GM12878 (cell line): ENCODE measurements at regions of chr2 and their contacts with region 1.

Region 1: DNA sequence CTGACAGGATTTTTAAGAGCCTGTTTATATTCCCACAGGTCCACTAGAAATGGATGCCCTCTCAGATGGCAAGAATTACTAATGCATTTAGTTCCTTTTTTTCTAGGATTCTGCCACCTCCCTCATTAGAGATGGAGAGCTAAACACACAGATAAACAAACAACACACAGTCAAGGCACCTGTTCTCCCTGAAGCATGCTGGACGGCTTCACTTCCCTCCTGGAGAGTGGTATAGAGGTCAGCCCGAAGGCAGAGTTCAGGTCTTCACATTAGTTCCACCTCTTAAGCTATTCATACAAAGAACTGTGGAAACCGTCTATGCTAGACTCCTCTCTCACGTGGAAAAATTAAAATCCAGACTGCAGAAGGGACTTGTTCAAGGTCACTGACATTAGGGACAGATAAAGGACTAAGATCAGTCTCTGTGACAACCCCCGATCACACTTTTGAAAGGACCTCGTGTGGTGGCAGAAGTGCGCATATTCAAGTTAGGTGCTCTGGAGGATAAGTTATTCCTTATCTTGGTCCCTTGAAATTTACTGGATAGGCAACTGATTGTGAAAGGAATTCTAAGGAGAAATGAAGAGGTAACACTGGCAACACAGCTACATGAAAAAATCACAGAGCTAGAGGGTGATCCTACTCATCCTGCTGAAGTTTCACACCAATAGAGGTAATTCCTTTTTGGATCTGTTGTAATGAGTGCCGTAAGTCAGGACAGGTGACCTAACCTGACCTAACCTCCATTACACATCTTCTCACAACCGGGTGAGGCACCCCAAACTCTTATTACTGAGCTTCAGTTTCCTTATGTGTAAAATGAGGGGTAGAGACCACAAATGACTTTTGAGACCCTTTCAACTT is 75.1 kb downstream of the SPRED2 start:
- DNase-seq: no peak
- ATAC-seq: peak; percentile 75
- H3K4me3 ChIP-seq: 0 out of 2 replicates have a peak overlapping the region, but pooled peaks have one; percentile 38
- H3K27ac ChIP-seq: peak overlapping the region; percentile 75
- H3K4me1 ChIP-seq: peaks cover 41% of the 10 kb centered on the region
- H3K27me3 ChIP-seq: no peaks in the 10 kb centered on the region
- CTCF ChIP-seq: no peak
- EP300 ChIP-seq: no peak
- POLR2A ChIP-seq: no peak
- RAD21 ChIP-seq: no peak

Region 2: DNA sequence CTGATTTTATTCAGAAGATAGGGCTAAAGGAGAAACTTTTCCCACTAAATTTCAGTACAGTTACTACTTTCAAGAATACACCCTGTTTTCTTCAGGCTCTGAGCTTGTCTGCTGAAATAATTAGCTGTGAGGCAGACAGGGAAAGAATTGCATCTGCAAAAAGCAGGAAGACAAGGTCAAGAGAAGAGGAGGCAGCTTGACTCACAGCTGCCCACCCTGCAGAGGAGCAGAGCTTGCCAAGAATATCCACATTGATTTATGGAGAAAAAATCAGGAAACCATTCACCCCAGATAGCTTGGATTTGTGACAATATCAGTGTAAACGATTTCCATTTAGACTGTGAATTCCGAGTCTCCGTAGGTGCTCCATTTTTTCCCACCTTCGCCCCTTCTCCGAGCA is 80.7 kb before region 1 on chr2:
- CTCF ChIA-PET with region 1: no interaction called
- POLR2A ChIA-PET with region 1: no interaction called
- RAD21 ChIA-PET with region 1: no interaction called
- SMC1A ChIA-PET with region 1: no interaction called
- in situ Hi-C with region 1: no loop called
- intact Hi-C with region 1: no loop called
- DNase-seq: no peak
- ATAC-seq: no peak
- H3K4me3 ChIP-seq: no peak overlapping the region
- H3K27ac ChIP-seq: no peak overlapping the region
- H3K4me1 ChIP-seq: no peaks in the 10 kb centered on the region
- H3K27me3 ChIP-seq: no peaks in the 10 kb centered on the region
- CTCF ChIP-seq: no peak
- EP300 ChIP-seq: no peak
- POLR2A ChIP-seq: no peak
- RAD21 ChIP-seq: no peak

Region 3: DNA sequence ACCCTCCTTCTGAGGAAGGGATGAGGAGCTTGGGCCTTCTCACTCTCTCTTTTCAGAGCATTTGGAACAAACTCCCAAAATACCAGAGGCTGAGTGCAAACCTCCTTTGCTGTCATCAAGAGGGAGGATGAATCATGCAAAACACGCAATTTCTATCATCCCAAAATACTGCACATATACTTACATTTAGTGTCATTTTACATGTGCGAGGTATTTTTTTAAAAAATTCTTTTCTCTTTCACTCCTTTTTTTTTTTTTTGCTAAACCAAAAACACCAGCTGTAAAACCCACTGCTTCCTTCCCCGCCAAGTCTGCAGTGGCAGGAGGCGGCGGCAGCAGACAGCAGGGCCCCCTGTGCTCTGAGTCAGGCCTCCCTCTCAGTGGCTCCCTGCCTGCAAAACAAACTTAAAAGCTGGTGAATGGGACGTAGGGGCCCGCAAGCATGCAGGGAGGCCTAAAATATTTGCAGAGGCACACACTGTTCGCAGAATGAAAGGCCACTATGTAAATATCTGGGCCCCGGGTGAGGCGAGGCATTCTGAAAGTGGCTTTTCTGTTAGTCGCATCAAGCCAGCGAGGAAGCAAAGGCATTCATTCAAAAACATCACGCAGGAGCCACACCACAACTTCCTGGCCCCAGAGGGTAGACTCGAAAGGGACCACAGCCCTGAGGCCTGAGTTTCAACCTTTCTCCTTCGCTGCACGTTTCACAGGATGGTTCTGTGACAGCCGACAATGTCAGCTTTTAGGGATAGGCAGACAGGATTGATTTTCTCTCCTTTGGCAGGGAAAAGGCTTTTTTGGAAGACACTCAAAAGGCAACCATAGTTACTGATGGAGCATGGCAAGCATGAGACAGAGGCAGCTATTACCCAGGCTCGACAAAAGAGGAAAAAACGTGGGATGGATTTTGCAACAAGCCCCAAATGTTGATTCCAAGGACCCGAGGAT is 56.3 kb before region 1 on chr2:
- CTCF ChIA-PET with region 1: interaction called, 4 read pairs
- POLR2A ChIA-PET with region 1: no interaction called
- RAD21 ChIA-PET with region 1: interaction called, 8 read pairs
- SMC1A ChIA-PET with region 1: interaction called, 19 read pairs
- in situ Hi-C with region 1: no loop called
- intact Hi-C with region 1: no loop called
- DNase-seq: peak; percentile 61
- ATAC-seq: peak; percentile 84
- H3K4me3 ChIP-seq: peak overlapping the region; percentile 17; the same call in 1 of the 2 replicates
- H3K27ac ChIP-seq: peak overlapping the region; percentile 38
- H3K4me1 ChIP-seq: peaks cover 40% of the 10 kb centered on the region
- H3K27me3 ChIP-seq: no peaks in the 10 kb centered on the region
- CTCF ChIP-seq: no peak
- EP300 ChIP-seq: no peak
- POLR2A ChIP-seq: no peak
- RAD21 ChIP-seq: no peak

Region 4: GRCh38 chr2:65377556-65378192 is 20.3 kb after region 1 on chr2:
- CTCF ChIA-PET with region 1: interaction called, 31 read pairs
- POLR2A ChIA-PET with region 1: interaction called, 3 read pairs
- RAD21 ChIA-PET with region 1: interaction called, 14 read pairs
- SMC1A ChIA-PET with region 1: interaction called, 142 read pairs
- in situ Hi-C with region 1: no loop called
- intact Hi-C with region 1: no loop called
- DNase-seq: no peak
- ATAC-seq: peak; percentile 64
- H3K4me3 ChIP-seq: no peak overlapping the region
- H3K27ac ChIP-seq: no peak overlapping the region
- H3K4me1 ChIP-seq: peaks cover 29% of the 10 kb centered on the region
- H3K27me3 ChIP-seq: no peaks in the 10 kb centered on the region
- CTCF ChIP-seq: no peak
- EP300 ChIP-seq: no peak
- POLR2A ChIP-seq: no peak
- RAD21 ChIP-seq: no peak

Region 5: GRCh38 chr2:65390134-65390533 is 32.8 kb after region 1 on chr2:
- CTCF ChIA-PET with region 1: interaction called, 3 read pairs
- POLR2A ChIA-PET with region 1: interaction called, 7 read pairs
- RAD21 ChIA-PET with region 1: interaction called, 28 read pairs
- SMC1A ChIA-PET with region 1: interaction called, 15 read pairs
- in situ Hi-C with region 1: no loop called
- intact Hi-C with region 1: loop called (anchors 2 kb)
- DNase-seq: peak; percentile 71
- ATAC-seq: peak; percentile 73
- H3K4me3 ChIP-seq: 0 out of 2 replicates have a peak overlapping the region, but pooled peaks have one; percentile 22
- H3K27ac ChIP-seq: peak overlapping the region; percentile 78
- H3K4me1 ChIP-seq: peaks cover 74% of the 10 kb centered on the region
- H3K27me3 ChIP-seq: no peaks in the 10 kb centered on the region
- CTCF ChIP-seq: no peak
- EP300 ChIP-seq: peak; percentile 62 to 85; a peak in 3 of 4 replicates
- POLR2A ChIP-seq: peak; percentile 56
- RAD21 ChIP-seq: no peak

Region 6: DNA sequence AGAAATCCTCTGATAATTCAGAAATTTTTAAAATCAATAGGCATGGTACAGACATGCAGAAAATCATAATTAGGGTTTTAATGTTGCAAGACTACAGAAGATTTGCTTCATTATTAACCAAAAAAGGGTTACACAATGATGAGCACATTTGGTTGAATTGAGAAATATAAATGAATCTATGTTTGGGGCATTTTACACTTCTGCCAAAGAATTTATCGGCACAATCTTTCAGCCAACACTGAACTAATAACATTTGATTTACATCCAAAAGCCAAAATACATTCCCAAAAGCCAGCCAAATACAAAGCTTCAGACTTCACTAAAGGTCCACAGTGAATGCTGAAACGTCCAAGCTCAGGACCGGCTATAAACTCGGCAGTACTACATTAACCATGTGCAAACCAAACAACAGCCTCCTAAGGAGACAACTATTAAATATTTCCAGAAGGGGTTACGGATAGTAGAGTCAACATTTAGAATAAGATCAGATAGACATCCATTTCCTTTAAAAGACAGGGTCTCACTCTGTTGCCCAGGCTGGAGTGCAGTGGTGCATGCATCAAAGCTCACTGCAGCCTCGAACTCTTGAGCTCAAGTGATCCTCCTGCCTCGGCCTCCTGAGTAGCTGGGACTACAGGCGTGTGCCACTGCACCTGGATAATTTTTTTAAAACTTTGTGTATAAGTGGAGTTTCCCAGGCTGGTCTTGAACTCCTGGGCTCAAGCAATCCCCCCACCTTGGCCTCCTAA is 45.6 kb after region 1 on chr2:
- CTCF ChIA-PET with region 1: no interaction called
- POLR2A ChIA-PET with region 1: no interaction called
- RAD21 ChIA-PET with region 1: interaction called, 6 read pairs
- SMC1A ChIA-PET with region 1: interaction called, 25 read pairs
- in situ Hi-C with region 1: no loop called
- intact Hi-C with region 1: no loop called
- DNase-seq: no peak
- ATAC-seq: no peak
- H3K4me3 ChIP-seq: no peak overlapping the region
- H3K27ac ChIP-seq: no peak overlapping the region
- H3K4me1 ChIP-seq: peaks cover 22% of the 10 kb centered on the region
- H3K27me3 ChIP-seq: no peaks in the 10 kb centered on the region
- CTCF ChIP-seq: no peak
- EP300 ChIP-seq: no peak
- POLR2A ChIP-seq: no peak
- RAD21 ChIP-seq: no peak